Motor neuron (in vitro differentiated cells): ENCODE measurements at regions of chr12 and their contacts with region 1.

Region 1: DNA sequence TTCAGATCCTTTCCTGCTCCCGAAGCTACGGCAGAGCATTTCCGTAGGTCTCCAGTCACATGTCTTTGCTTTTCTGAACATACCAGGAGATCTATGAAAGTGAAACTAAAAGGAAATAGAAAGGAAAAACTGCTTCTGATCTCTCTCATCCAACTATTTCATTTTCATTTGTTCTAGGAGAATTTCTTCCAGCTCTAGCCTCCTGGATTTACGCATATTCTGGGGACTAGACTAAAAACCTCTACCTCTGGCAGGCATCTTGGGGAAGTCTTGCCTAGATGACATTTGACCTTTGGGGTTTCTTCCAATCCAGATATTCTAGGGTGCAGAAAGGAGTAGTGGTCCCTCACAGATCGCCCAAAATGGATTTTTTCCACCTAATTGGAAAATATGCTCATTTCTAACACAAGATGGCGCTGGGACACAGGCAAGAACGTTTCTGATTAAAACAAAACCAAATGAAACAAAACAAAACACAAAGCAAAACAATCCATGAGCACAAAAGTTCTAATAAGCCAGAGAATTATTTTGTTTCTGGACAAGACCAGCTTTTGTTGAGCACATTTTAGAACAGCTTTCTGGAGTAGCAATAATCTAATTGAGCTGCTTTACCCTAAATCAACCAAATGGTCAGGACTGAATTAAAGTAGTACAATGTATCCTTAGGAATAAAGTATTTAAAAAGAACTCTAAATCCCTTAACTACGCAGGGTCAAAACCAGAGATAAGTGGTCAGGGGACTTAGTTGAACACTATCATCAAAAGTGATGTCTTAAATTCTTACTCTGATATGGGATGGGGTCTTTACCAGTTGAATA is 12.3 kb upstream of the PARP11 start:
- ATAC-seq: peak in 4 of 8 experiments; percentile 14 to 92 (median 50)
- H3K4me3 ChIP-seq: no peak overlapping the region
- H3K27ac ChIP-seq: no peak overlapping the region
- H3K4me1 ChIP-seq: peaks cover 19 to 27% of the 10 kb centered on the region in 2 donors

Region 2: GRCh38 chr12:3511760-3512159 is 373.7 kb before region 1 on chr12:
- in situ Hi-C with region 1: no loop called
- ATAC-seq: no peak
- H3K4me3 ChIP-seq: no peak overlapping the region
- H3K27ac ChIP-seq: no peak overlapping the region
- H3K4me1 ChIP-seq: no peaks in the 10 kb centered on the region

Region 3: DNA sequence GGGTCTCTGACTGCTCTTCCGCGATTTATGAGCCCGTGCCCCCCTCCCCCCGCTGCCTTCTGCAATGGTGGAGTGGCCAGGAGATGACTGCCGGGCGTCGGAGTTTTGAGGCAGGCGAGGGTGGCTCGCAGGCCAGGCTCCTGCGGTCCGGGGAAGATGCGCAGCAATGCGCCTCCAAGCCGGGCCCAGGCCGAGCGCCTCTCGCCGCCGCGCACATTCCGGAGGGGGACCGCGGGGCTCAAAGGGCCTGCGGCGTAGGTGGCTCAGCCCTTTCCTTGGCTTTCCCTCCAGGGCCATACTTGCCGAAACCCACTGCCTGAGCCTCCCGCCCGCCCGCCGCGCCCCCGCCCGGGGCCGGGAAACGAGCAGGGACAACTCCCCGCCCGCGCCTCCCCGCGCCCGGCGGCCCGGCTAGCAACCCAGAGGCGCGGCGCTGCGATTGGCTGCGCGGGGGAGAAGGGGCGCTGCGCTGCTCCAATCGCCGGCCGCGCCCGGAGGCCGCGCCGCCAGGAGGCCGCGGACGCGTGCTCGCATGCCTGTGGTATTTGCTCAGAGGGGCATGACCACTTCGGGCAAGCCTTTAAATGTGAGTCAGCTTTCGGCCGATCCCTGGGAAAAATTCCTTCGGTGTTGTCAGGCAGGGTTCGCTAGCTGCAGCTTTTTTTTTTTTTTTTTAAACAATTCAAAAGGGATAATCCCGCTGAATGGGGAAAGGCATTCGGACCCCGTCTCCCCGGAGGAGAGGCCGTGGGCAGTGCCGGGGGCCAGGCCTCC is 145.6 kb after region 1 on chr12:
- in situ Hi-C with region 1: loop called in 6 of 9 experiments (anchors 10 to 25 kb)
- ATAC-seq: peak; percentile 96 to 99 (median 98)
- H3K4me3 ChIP-seq: peak overlapping the region; percentile 32 to 43 (median 36)
- H3K27ac ChIP-seq: no peak overlapping the region
- H3K4me1 ChIP-seq: peaks cover 8 to 10% of the 10 kb centered on the region in 2 donors